Caco-2 (cell line): ENCODE measurements at regions of chr19 and their contacts with region 1.

Region 1: DNA sequence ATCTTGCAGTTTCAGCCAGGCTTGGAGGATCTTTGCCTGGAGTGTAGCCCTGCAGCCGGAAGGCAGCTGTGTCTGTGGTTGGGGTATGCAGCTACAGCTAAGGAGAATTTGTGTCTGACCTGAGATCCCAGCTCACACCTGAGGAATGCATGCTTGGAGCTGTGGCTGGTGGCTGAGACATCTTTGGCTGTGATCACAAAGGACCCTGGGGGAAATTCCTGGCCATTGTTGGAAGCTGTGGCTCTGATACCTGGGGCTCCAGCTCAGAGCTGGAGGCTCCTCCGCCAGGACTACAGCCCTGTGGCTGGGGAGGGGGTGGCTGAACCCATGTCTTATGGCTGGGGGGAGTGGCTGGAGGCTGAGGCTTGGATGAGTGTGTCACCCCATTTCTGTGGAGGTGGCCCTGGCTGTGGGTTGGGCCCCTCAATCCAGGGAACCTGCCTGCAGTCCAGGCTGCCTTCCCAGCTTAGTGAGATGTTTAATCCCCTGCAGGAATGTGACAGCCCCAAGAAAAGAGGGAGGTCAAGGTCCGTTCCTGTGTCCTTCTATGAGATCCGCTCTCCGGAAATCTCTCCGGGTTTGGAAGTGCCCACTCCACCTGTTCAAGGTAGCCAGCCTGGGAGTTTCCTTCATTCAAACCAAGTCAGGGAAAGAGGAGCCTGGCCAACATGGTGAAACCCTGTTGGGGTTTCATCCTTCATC is 27.6 kb downstream of the ARHGEF18 start:
- DNase-seq: peak; percentile 63 to 79
- H3K4me3 ChIP-seq: no peak overlapping the region
- H3K4me3 Mint-ChIP-seq: peak overlapping the region; percentile 65
- H3K27ac Mint-ChIP-seq: peak overlapping the region; percentile 98
- H3K4me1 ChIP-seq: peaks cover 44% of the 10 kb centered on the region
- H3K4me1 Mint-ChIP-seq: peaks cover 37% of the 10 kb centered on the region
- H3K27me3 ChIP-seq: no peaks in the 10 kb centered on the region
- H3K27me3 Mint-ChIP-seq: no peaks in the 10 kb centered on the region
- CTCF ChIP-seq: no peak

Region 2: DNA sequence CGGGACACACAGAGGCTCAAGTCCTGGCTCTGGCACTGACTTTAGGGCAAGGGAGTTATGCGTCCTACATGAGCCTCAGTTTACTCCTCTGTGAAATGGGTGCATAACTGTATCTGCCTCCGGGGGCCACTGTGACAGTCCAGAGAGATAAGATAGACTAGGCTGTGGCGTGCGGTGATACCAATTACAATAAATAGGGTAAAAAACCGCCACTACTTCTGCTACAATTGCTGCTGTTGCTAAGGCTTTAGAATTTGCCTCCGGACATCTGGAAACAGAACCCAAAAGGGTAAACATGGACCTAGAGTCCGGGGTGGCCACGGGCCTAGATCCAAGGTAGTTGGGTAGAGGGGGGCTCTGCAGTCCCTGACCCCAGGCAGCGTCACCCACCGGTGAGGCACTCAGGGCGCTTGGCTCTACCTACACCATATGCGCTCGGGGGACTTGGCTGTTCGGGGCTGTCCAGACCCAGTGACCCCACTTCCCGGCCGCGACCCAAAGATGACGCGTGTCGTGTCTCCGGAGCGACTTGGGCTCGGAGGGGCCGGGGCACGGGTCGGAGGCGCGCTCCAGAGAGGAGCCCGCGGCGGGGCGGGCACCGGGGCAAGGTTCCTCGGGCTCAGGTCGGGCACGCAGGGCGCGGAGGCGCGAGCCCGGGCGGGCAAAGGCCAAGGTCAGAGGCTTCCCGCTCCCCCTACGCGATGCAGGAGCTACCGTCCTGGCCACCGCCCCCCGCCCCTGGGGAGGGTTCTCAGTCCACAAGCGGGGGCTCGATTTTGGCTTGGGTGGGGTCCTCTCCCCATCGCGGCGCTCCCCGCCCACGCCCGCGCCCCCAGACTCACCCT is 83.1 kb before region 1 on chr19:
- CTCF ChIA-PET with region 1: no interaction called
- POLR2A ChIA-PET with region 1: no interaction called
- intact Hi-C with region 1: no loop called
- DNase-seq: peak in 1 of 2 experiments; percentile 43
- H3K4me3 ChIP-seq: peak overlapping the region; percentile 73
- H3K4me3 Mint-ChIP-seq: peak overlapping the region; percentile 89
- H3K27ac Mint-ChIP-seq: no peak overlapping the region
- H3K4me1 ChIP-seq: peaks cover 17% of the 10 kb centered on the region
- H3K4me1 Mint-ChIP-seq: peaks cover 9% of the 10 kb centered on the region
- H3K27me3 ChIP-seq: no peaks in the 10 kb centered on the region
- H3K27me3 Mint-ChIP-seq: no peaks in the 10 kb centered on the region
- CTCF ChIP-seq: no peak

Region 3: DNA sequence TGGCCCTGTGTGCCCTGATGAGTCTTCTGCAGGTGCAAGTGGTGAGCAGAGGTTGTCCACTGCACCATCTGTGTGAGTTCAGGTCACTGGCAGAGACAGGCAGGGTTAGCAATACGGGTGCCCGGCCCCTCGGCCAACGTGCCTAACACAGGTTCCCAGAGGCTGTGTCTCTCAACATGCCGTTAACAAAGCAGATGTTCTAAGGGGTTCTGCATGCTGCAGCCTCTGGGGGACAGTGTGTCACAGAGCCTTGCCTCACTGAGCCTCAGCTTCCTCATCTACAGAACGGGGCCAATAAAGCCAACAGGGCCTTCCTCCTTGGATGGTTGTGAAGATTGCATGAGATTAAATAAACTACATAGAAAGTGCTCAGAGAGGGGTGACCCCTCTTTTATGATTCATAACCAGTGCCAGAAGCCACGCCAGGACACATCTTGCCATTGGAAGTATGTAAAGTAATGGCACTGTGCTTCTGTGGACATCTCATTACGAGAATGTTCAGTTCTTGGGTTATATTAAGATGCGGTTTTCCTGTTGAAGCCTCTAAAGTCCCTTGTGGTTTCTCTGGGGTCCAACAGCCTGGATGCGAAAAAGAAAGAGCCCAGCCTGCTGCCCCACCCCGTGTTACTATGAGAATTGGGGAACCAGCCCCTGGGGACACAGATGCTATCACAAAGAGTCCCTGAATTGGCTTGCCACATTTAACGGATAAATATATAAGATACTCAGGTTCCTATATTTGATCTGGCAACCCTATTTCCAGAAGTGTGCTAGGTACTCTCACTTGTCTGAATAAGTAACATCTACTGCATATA is 38.7 kb before region 1 on chr19:
- CTCF ChIA-PET with region 1: no interaction called
- POLR2A ChIA-PET with region 1: no interaction called
- intact Hi-C with region 1: no loop called
- DNase-seq: peak in 1 of 2 experiments; percentile 23
- H3K4me3 ChIP-seq: no peak overlapping the region
- H3K4me3 Mint-ChIP-seq: no peak overlapping the region
- H3K27ac Mint-ChIP-seq: no peak overlapping the region
- H3K4me1 ChIP-seq: no peaks in the 10 kb centered on the region; the same call in 1 of the 2 replicates
- H3K4me1 Mint-ChIP-seq: no peaks in the 10 kb centered on the region
- H3K27me3 ChIP-seq: no peaks in the 10 kb centered on the region
- H3K27me3 Mint-ChIP-seq: peaks cover 3% of the 10 kb centered on the region
- CTCF ChIP-seq: no peak

Region 4: GRCh38 chr19:7349961-7350711 is 26.2 kb before region 1 on chr19:
- CTCF ChIA-PET with region 1: interaction called, 18 read pairs
- POLR2A ChIA-PET with region 1: interaction called, 3 read pairs
- intact Hi-C with region 1: loop called (anchors 1 kb)
- DNase-seq: peak in 1 of 2 experiments; percentile 15
- H3K4me3 ChIP-seq: no peak overlapping the region
- H3K4me3 Mint-ChIP-seq: no peak overlapping the region
- H3K27ac Mint-ChIP-seq: no peak overlapping the region
- H3K4me1 ChIP-seq: no peaks in the 10 kb centered on the region
- H3K4me1 Mint-ChIP-seq: peaks cover 12% of the 10 kb centered on the region
- H3K27me3 ChIP-seq: no peaks in the 10 kb centered on the region
- H3K27me3 Mint-ChIP-seq: no peaks in the 10 kb centered on the region
- CTCF ChIP-seq: no peak

Region 5: DNA sequence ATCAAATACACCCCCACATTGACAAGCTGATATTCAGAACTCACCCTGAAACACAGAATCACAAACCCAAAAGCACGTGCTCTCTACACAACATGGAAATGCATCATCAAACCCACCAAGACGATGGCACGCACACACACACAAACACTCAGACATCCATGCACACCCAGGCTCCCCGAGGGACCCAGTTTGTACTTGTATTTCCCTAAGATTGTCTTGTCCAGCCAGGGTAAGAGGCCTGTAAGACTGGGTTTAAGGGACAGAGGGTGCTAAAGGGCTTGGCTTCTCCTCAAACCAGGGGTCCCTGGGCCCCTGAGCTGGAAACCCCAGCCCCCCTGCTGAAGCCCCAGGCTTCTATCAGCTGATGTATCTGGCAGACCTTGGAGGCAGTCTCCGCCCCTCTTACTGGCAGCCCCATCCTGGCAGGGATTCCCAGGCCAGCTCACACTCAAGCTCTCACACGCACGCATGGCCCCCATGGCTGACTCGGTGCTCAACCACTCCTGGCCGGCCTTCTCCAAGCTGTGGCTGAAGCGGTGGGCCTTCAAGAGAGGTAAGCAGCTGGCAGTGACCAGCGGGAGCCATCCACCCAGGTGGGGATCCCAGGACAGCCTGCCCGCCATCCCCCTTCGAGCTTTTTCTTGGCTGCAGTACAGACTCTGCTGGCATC is 21.0 kb before region 1 on chr19:
- CTCF ChIA-PET with region 1: interaction called, 18 read pairs
- POLR2A ChIA-PET with region 1: interaction called, 3 read pairs
- intact Hi-C with region 1: loop called (anchors 1 kb)
- DNase-seq: no peak
- H3K4me3 ChIP-seq: no peak overlapping the region
- H3K4me3 Mint-ChIP-seq: no peak overlapping the region
- H3K27ac Mint-ChIP-seq: peak overlapping the region; percentile 33
- H3K4me1 ChIP-seq: no peaks in the 10 kb centered on the region
- H3K4me1 Mint-ChIP-seq: peaks cover 12% of the 10 kb centered on the region
- H3K27me3 ChIP-seq: no peaks in the 10 kb centered on the region
- H3K27me3 Mint-ChIP-seq: peaks cover 3% of the 10 kb centered on the region
- CTCF ChIP-seq: no peak